Heart left ventricle (tissue), 16 donors: ENCODE measurements at regions of chr1 and their contacts with region 1.

Region 1: GRCh38 chr1:167401260-167401873 is 117.0 kb downstream of the CD247 start:
- DNase-seq: peak in 3 of 5 donors; percentile 24 to 32 (median 27)
- ATAC-seq: peak in 3 of 4 donors; percentile 49 to 68 (median 62)
- H3K4me3 ChIP-seq: no peak overlapping the region
- H3K27ac ChIP-seq: no peak overlapping the region
- H3K4me1 ChIP-seq: peaks cover 0 to 9% (median 0%) of the 10 kb centered on the region in 12 donors
- H3K27me3 ChIP-seq: no peaks in the 10 kb centered on the region
- CTCF ChIP-seq: peak; percentile 23 to 64 (median 47)
- POLR2A ChIP-seq: no peak

Region 2: DNA sequence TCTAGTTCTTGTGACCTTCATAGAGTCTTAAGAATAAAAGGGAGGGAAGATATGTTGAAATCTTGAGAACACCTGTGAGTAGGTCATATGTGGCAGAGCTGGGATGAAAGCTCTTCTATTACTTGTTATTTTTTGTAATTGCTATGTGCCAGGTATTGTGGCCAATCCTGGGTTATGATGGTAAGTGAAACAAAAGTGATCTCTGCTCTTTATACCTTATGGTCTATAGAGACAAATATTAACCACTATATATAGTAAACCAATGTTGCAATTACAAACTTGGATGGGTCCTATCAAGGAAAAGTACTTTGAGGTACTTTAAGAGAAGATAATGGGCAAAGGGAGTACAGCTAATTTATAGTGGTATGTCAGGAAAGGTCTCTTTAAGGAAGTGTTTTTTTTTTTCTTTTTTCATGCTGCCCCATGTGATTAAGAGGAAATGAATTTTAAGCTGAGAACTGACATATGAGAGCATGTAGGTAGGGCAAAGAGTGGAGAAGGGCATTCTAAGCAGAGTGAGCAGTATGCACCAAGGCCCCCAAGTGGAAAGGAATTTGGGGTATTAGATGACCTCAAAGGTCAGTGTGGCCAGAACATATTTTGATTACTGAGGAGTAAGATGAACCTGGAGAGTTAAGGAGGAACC is 137.4 kb before region 1 on chr1:
- intact Hi-C with region 1: loop called in 2 of 10 experiments (anchors 10 kb)
- DNase-seq: no peak
- ATAC-seq: peak in 2 of 4 donors; percentile 11 to 34
- H3K4me3 ChIP-seq: no peak overlapping the region
- H3K27ac ChIP-seq: peak overlapping the region in 1 of 12 donors; percentile 42
- H3K4me1 ChIP-seq: peaks cover 0 to 66% (median 41%) of the 10 kb centered on the region in 12 donors
- H3K27me3 ChIP-seq: no peaks in the 10 kb centered on the region
- CTCF ChIP-seq: no peak
- POLR2A ChIP-seq: no peak

Region 3: DNA sequence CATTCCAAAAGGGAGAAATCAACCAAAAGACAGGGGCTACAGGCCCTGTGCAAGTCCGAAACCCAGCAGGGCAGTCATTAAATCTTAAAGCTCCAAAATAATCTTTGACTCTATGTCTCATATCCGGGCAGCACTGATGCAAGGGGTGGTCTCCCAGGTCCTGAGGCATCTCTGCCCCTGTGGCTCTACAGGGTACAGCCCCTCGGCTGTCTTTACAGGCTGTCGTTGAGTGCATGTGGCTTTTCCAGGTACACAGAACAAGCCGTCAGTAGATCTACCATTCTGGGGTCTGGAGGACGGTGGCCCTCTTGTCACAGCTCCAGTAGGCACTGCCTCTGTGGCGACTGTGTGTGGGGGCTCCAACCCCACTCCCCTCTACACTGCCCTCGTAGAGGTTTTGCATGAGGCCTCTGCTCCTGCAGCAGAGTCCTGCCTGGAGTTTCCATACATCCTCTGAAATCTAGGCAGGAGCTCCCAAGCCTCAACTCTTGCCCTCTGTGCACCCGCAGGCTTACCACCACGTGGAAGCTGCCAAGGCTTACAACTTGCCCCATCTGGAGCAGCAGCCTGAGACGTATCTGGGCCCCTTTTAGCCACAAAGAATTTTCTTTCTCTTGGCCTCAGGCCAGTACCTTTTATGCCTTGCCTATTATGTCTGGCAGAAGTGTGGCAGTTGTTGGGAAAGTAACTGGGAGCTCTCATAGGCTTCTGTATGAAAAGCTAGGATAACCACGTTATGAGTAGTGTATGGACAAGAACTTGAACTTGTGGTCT is 128.2 kb before region 1 on chr1:
- intact Hi-C with region 1: loop called in 3 of 10 experiments (anchors 10 kb)
- DNase-seq: no peak
- ATAC-seq: peak; percentile 37 to 69 (median 64)
- H3K4me3 ChIP-seq: no peak overlapping the region
- H3K27ac ChIP-seq: no peak overlapping the region
- H3K4me1 ChIP-seq: peaks cover 0 to 40% (median 20%) of the 10 kb centered on the region in 12 donors
- H3K27me3 ChIP-seq: no peaks in the 10 kb centered on the region
- CTCF ChIP-seq: no peak
- POLR2A ChIP-seq: no peak

Region 4: GRCh38 chr1:167387251-167387910 is 14.0 kb before region 1 on chr1:
- intact Hi-C with region 1: loop called in 1 of 10 experiments (anchors 1 kb)
- DNase-seq: no peak
- ATAC-seq: peak in 3 of 4 donors; percentile 26 to 64 (median 57)
- H3K4me3 ChIP-seq: no peak overlapping the region
- H3K27ac ChIP-seq: peak overlapping the region in 1 of 12 donors; percentile 38
- H3K4me1 ChIP-seq: peaks cover 0 to 8% (median 0%) of the 10 kb centered on the region in 12 donors
- H3K27me3 ChIP-seq: no peaks in the 10 kb centered on the region
- CTCF ChIP-seq: no peak
- POLR2A ChIP-seq: no peak

Region 5: GRCh38 chr1:167442124-167442848 is 40.9 kb after region 1 on chr1:
- intact Hi-C with region 1: loop called in 1 of 10 experiments (anchors 2 kb)
- DNase-seq: peak; percentile 79 to 91 (median 87)
- ATAC-seq: peak; percentile 86 to 96 (median 94)
- H3K4me3 ChIP-seq: no peak overlapping the region
- H3K27ac ChIP-seq: no peak overlapping the region
- H3K4me1 ChIP-seq: peaks cover 0 to 17% (median 9%) of the 10 kb centered on the region in 12 donors
- H3K27me3 ChIP-seq: peaks cover 0 to 18% (median 10%) of the 10 kb centered on the region in 9 donors
- CTCF ChIP-seq: peak; percentile 79 to 94 (median 88)
- POLR2A ChIP-seq: no peak

Region 6: GRCh38 chr1:167533851-167534300 is 132.5 kb after region 1 on chr1:
- intact Hi-C with region 1: loop called in 8 of 10 experiments (anchors 5 to 10 kb)
- DNase-seq: peak in 4 of 5 donors; percentile 40 to 58 (median 58)
- ATAC-seq: peak; percentile 61 to 89 (median 88)
- H3K4me3 ChIP-seq: no peak overlapping the region
- H3K27ac ChIP-seq: peak overlapping the region in 2 of 12 donors; percentile 11 to 20
- H3K4me1 ChIP-seq: peaks cover 0 to 8% (median under 1%) of the 10 kb centered on the region in 12 donors
- H3K27me3 ChIP-seq: no peaks in the 10 kb centered on the region
- CTCF ChIP-seq: peak; percentile 79 to 95 (median 90)
- POLR2A ChIP-seq: no peak

Region 7: GRCh38 chr1:167548059-167548932 is 146.9 kb after region 1 on chr1:
- intact Hi-C with region 1: loop called in 1 of 10 experiments (anchors 10 kb)
- DNase-seq: no peak
- ATAC-seq: no peak
- H3K4me3 ChIP-seq: peak overlapping the region in 1 of 12 donors; percentile 91
- H3K27ac ChIP-seq: peak overlapping the region in 7 of 12 donors; percentile 24 to 93 (median 45)
- H3K4me1 ChIP-seq: peaks cover 0 to 79% (median 10%) of the 10 kb centered on the region in 12 donors
- H3K27me3 ChIP-seq: no peaks in the 10 kb centered on the region
- CTCF ChIP-seq: no peak
- POLR2A ChIP-seq: no peak

Region 8: GRCh38 chr1:167776151-167776550 is 374.8 kb after region 1 on chr1:
- intact Hi-C with region 1: no loop called
- DNase-seq: no peak
- ATAC-seq: no peak
- H3K4me3 ChIP-seq: no peak overlapping the region
- H3K27ac ChIP-seq: no peak overlapping the region
- H3K4me1 ChIP-seq: peaks cover 0 to 11% (median 0%) of the 10 kb centered on the region in 12 donors
- H3K27me3 ChIP-seq: no peaks in the 10 kb centered on the region
- CTCF ChIP-seq: no peak
- POLR2A ChIP-seq: no peak